Astrocyte of the cerebellum (primary cell): ENCODE measurements at regions of chr6 and their contacts with region 1.

Region 1: DNA sequence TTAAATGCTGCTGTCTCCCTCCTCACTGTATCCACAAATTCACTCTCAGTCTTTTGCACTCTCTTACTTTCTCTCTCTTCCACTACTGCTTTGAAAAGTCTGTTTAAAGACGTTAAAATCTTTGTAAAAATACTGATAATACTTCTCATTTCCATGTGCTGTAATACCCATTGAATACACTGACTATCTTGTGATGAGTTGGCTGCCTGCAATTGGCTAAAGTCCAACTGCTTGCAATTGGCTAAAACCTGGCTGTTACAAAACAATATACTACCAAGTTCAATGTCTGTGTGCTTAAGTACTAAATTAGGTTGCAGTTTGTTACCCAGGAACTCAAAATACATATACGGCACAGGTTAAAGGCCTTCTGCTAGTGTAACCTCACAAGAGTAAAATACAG is 264.8 kb downstream of the THBS2 start:
- DNase-seq: no peak
- H3K4me3 ChIP-seq: no peak overlapping the region
- CTCF ChIP-seq: no peak

Region 2: DNA sequence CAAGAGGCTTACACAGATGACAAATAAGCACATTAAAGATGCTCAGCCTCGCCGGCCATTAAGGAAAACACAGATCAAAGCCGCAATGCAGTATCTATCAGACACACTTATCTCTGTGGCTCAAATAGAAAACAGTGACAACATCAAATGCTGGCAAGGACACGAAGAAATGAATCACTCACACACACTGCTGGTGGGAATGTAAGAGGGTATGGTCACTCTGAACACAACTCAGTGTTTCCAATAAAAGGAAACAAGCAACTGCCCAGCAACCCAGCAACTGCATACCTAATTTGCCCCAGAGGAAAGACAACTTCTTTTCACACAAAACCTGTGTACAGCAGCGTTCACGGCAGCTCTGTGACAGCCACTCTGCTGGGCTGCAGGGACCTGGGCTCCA is 557.2 kb after region 1 on chr6:
- in situ Hi-C with region 1: loop called (anchors 10 kb)
- DNase-seq: no peak
- H3K4me3 ChIP-seq: no peak overlapping the region
- CTCF ChIP-seq: no peak